MCF 10A (cell line): ENCODE measurements at regions of chr14 and their contacts with region 1.

Region 1: GRCh38 chr14:52729925-52730667 is at the start of gene STYX:
- DNase-seq: peak; percentile 98
- H3K4me3 Mint-ChIP-seq: peak within 1 kb of the TSS; percentile 96
- H3K27ac Mint-ChIP-seq: peak within 1 kb of the TSS; percentile 93
- H3K4me1 Mint-ChIP-seq: no peaks in the 10 kb centered on the region
- H3K27me3 Mint-ChIP-seq: no peaks in the 10 kb centered on the region
- CTCF ChIP-seq: no peak
- total RNA-seq, gene STYX: 15.5 and 16.3 TPM in 2 replicates

Region 2: GRCh38 chr14:52695481-52696091 is 34.5 kb before region 1 on chr14 and contains the start of gene ERO1A:
- CTCF ChIA-PET with region 1: no interaction called
- POLR2A ChIA-PET with region 1: interaction called, 20 read pairs
- intact Hi-C with region 1: no loop called
- DNase-seq: peak; percentile 84
- H3K4me3 Mint-ChIP-seq: peak within 1 kb of the TSS; percentile 97
- H3K27ac Mint-ChIP-seq: peak within 1 kb of the TSS; percentile 92
- H3K4me1 Mint-ChIP-seq: peaks cover 28% of the 10 kb centered on the region
- H3K27me3 Mint-ChIP-seq: no peaks in the 10 kb centered on the region
- CTCF ChIP-seq: no peak
- total RNA-seq, gene ERO1A: 52.0 and 55.5 TPM in 2 replicates

Region 3: DNA sequence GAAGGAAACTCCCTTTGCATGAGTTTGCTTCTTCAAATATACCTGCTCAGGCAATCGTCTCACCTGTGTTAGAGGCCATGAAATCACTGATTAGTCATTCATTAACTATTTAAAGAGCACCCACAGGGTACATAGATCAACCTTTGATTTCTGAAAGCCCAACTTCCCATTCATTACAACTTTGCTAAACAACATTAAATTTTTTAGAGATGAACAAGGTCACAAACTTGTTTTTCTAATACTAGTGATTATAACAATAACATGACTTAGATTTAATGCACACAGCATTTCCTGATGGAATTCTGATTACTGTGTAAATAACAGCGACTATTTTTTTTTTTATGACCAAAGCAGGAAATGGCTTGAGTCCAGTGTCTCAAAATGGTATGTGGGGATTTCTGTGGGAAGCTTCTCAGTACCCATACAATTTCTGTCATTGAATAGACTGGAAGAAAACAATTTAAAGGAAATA is 29.4 kb before region 1 on chr14:
- CTCF ChIA-PET with region 1: no interaction called
- POLR2A ChIA-PET with region 1: interaction called, 20 read pairs
- intact Hi-C with region 1: no loop called
- DNase-seq: peak; percentile 55
- H3K4me3 Mint-ChIP-seq: no peak overlapping the region
- H3K27ac Mint-ChIP-seq: peak overlapping the region; percentile 38
- H3K4me1 Mint-ChIP-seq: peaks cover 21% of the 10 kb centered on the region
- H3K27me3 Mint-ChIP-seq: no peaks in the 10 kb centered on the region
- CTCF ChIP-seq: no peak

Region 4: DNA sequence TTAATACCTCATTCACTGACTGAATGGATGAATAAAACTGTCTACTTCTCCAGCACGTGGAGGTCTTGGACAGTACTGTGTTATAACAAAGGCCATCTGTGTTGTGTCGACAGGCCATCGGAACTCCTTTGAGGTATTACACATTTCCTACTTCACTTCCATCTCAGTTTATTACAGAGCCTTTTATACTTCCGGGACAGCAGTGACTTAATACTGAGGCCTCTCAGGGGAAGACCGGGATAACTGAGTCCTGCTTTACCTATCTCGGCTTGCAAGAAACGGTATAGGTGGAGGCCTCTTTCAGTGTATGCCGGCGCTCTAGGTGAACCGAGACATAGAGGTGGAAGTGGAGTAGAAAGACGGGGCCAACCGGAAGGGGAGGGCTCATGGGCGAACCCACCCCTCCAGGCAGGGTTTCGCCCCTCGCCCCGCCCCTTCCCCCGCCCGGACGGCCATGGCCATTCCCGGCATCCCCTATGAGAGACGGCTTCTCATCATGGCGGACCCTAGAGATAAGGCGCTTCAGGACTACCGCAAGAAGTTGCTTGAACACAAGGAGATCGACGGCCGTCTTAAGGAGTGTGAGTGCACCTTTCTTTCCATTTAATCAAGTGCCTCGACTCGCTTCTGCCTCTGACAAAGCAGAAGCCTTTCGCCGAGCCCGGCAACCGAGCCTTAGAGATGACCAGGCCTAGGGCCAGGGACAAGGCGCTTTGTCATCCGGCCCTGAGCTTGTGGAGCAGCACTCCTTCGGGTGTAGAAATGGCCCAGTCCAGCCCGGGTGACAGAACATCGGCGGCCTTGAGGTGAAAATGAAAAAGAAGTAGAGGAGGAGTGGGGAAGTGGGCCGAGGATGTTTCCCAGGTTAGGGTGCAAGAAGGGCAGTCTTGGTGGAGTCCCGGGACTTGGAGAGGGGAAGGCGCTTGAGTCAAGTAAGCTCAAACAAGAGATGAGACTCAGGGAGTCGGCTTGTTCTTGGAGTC is 23.1 kb before region 1 on chr14 and contains the start of gene PSMC6:
- CTCF ChIA-PET with region 1: interaction called, 3 read pairs
- POLR2A ChIA-PET with region 1: interaction called, 73 read pairs
- intact Hi-C with region 1: no loop called
- DNase-seq: peak; percentile 95
- H3K4me3 Mint-ChIP-seq: peak within 1 kb of the TSS; percentile 98
- H3K27ac Mint-ChIP-seq: peak within 1 kb of the TSS; percentile 99
- H3K4me1 Mint-ChIP-seq: peaks cover 22% of the 10 kb centered on the region
- H3K27me3 Mint-ChIP-seq: no peaks in the 10 kb centered on the region
- CTCF ChIP-seq: no peak
- total RNA-seq, gene PSMC6: 83.9 and 90.0 TPM in 2 replicates

Region 5: GRCh38 chr14:52716155-52716554 is 13.9 kb before region 1 on chr14:
- CTCF ChIA-PET with region 1: interaction called, 3 read pairs
- POLR2A ChIA-PET with region 1: interaction called, 73 read pairs
- intact Hi-C with region 1: no loop called
- DNase-seq: no peak
- H3K4me3 Mint-ChIP-seq: no peak overlapping the region
- H3K27ac Mint-ChIP-seq: no peak overlapping the region
- H3K4me1 Mint-ChIP-seq: no peaks in the 10 kb centered on the region
- H3K27me3 Mint-ChIP-seq: no peaks in the 10 kb centered on the region
- CTCF ChIP-seq: no peak

Region 6: GRCh38 chr14:52741865-52742264 is 11.8 kb after region 1 on chr14:
- CTCF ChIA-PET with region 1: interaction called, 3 read pairs
- POLR2A ChIA-PET with region 1: interaction called, 13 read pairs
- intact Hi-C with region 1: no loop called
- DNase-seq: no peak
- H3K4me3 Mint-ChIP-seq: no peak overlapping the region
- H3K27ac Mint-ChIP-seq: no peak overlapping the region
- H3K4me1 Mint-ChIP-seq: peaks cover 15% of the 10 kb centered on the region
- H3K27me3 Mint-ChIP-seq: no peaks in the 10 kb centered on the region
- CTCF ChIP-seq: no peak